ENCODE measurements at regions of chr1 and their contacts with region 1.

Region 1: DNA sequence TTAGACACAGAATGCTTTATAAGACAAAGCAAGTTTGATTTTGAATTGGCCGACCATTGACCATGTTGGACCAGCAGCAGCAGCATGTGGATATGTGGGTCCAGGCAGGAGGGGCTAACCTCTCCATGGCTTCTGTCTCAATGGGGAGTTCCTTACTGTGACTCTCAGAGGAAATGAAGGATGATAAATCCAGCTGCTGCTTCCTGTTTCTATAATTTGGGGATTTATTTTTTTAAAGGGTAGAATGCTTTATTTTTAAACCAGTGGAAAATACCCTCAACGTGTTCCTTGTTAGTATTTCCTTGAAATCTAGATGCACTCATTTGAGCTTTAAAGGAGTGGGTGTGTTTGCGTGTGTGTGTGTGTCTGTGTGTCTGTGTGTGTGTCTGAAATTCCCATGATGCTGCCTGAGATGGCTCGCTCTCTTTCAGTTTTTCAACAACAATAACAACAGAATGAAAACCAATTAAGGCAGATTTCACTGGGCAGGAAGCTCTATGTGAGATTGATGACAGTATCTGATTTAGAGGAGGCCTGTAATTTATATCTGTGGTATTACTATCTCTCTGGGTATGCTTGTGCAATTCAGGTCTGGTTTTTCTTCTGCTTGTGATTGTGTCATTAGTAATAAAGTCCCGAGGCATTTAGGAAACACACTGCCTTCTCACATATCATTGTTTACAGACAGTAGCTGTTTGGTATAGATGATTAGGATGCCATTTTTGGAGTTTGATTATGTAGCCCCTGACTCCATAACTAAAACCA is 86.1 kb upstream of the ZNF326 start:
- DNase-seq: peak in 1 of 2 experiments; percentile 95
- H3K4me3 ChIP-seq: peak overlapping the region; percentile 7; the same call in 1 of the 2 replicates
- H3K27ac ChIP-seq: peak overlapping the region; percentile 92
- H3K4me1 ChIP-seq: peaks cover 91% of the 10 kb centered on the region
- H3K27me3 ChIP-seq: no peaks in the 10 kb centered on the region
- CTCF ChIP-seq: no peak

Region 2: DNA sequence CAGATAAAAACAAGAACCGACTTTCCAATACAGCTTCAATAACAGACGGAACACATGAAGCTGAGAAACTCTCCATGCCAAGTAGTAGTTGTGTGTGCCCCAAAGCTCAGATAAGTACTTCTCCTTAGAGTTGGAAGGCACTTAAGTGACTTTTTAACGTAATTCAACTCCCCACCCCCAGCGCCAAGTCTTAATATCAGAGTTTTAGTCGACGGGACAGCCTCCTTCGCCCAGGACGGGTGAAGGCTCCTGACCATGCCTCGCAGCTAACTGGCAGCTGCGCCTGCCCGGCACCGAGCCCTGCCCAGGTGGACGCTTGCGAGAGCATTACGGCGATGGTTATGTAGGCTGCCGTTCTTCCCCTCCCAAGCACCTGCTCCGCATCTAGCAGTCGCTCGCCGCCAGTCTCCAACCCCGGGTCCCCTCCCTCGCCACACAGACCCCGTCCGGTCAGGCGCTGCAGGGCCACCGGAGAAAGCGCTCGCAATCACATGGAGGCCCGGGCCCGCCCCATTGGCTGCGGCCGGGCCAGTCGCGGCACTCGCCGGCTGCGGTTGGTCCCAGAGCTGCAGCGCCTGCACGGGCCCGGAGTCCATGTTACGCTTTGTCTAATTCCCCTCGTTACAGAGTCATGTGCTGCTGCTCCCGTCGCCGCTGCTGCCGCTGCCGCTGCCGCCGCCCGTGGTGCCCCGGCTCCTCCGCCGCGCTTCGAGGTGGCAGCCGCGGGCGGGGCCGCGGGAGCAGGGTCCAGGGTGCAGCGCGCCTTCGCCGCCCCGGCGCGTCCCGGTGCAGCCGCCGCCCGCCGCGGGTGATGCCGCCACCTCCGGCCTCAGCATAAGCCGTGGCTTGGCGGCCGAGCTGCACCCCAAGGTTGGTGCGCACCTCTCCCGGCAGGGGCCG is 88.2 kb before region 1 on chr1 and contains the start of gene LRRC8D:
- CTCF ChIA-PET with region 1: no interaction called
- POLR2A ChIA-PET with region 1: interaction called, 12 read pairs
- intact Hi-C with region 1: loop called (anchors 5 kb)
- DNase-seq: peak; percentile 82 to 86
- H3K4me3 ChIP-seq: peak within 1 kb of the TSS; percentile 75
- H3K27ac ChIP-seq: peak within 1 kb of the TSS; percentile 67
- H3K4me1 ChIP-seq: peaks cover 51% of the 10 kb centered on the region
- H3K27me3 ChIP-seq: no peaks in the 10 kb centered on the region
- CTCF ChIP-seq: no peak
- total RNA-seq, gene LRRC8D: 71.9 and 75.9 TPM in 2 replicates

Region 3: DNA sequence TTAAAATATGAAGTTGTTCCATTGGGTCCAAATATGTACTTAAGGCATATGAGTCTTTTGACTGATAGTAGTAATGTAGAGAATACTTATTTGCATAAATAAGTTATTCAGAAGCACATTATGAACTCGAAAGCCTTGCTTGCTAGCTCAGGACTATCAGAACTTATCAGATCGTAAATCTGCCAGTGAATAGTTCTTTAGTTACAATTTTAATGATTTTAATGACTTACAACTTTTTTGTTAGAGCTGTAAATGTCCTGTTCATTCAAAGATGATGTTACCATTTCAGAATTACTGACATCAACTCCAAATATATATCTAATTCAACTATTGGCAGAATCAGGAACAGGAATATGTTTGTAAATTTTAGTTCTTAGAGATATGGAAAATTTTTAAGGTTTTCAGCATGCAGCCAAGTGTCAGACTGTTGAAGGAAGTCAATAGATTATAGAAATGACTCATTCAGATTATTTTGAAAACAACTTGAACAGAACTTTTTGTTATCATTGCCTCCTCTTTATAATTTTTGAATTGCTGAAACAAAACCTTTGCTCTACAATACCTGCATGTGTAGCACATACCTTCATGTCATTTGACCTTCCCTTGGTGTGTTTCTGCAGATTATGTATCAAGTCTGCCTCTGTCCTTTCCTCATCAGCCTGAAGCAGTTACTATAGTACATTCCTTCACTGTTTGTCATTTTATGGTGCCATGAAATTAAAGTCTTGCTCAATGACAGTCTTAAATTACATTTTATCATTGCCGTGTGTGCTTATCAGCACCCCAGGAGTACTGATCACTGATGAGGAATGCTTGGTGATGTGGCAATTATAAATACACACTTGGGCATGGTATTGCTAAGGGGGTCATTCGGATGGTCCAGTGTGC is 43.1 kb before region 1 on chr1:
- CTCF ChIA-PET with region 1: no interaction called
- POLR2A ChIA-PET with region 1: no interaction called
- intact Hi-C with region 1: loop called (anchors 2 kb)
- DNase-seq: peak; percentile 28 to 100
- H3K4me3 ChIP-seq: peak overlapping the region; percentile 16; the same call in 1 of the 2 replicates
- H3K27ac ChIP-seq: peak overlapping the region; percentile 91
- H3K4me1 ChIP-seq: peaks cover 65% of the 10 kb centered on the region
- H3K27me3 ChIP-seq: no peaks in the 10 kb centered on the region
- CTCF ChIP-seq: no peak

Region 4: GRCh38 chr1:89953072-89953626 is 44.3 kb after region 1 on chr1:
- CTCF ChIA-PET with region 1: no interaction called
- POLR2A ChIA-PET with region 1: no interaction called
- intact Hi-C with region 1: loop called (anchors 1 kb)
- DNase-seq: peak; percentile 83 to 98
- H3K4me3 ChIP-seq: no peak overlapping the region
- H3K27ac ChIP-seq: peak overlapping the region; percentile 94
- H3K4me1 ChIP-seq: peaks cover 73% of the 10 kb centered on the region
- H3K27me3 ChIP-seq: no peaks in the 10 kb centered on the region
- CTCF ChIP-seq: no peak

Region 5: DNA sequence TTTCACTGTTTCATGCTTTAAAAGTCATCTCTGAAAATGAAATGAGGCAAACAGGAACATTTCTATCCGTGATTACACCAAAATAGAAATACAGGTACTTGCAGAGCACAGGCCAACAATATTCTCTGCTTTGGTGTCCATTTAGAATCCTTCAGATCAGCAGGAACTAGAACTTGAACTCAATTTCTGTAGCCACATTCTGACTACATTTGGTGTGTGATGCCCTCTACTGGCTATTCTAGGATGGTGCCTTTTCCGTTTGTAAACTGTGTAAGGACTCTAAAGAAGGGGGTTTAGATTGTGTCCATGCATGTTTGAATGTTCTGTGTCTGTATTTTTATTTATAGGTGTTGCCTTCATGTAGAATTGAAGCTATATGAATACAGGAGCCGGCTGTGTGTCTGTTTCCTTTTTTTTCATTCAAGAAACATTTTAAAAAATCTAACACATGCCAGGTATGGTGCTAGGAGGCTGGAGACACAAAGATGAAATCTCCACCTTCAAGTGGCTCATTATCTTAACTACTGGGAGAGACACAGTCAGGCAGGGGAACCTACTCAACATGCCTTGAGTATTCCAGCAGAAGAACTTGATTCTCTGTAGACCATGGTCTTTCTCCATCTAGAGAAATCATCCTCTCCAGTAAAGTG is 78.4 kb after region 1 on chr1:
- CTCF ChIA-PET with region 1: interaction called, 3 read pairs
- POLR2A ChIA-PET with region 1: interaction called, 3 read pairs
- intact Hi-C with region 1: loop called (anchors 2 kb)
- DNase-seq: peak; percentile 45 to 76
- H3K4me3 ChIP-seq: no peak overlapping the region
- H3K27ac ChIP-seq: peak overlapping the region; percentile 8
- H3K4me1 ChIP-seq: peaks cover 75% of the 10 kb centered on the region
- H3K27me3 ChIP-seq: no peaks in the 10 kb centered on the region
- CTCF ChIP-seq: peak; percentile 99

Measured in PC-9 (cell line).